GM10248 (cell line): ENCODE measurements at regions of chr10 and their contacts with region 1.

Region 1: GRCh38 chr10:7687228-7687907 is 15.7 kb upstream of the ITIH2 start:
- DNase-seq: peak; percentile 78
- CTCF ChIP-seq: peak; percentile 87

Region 2: GRCh38 chr10:7671121-7671520 is 16.2 kb before region 1 on chr10:
- CTCF ChIA-PET with region 1: interaction called, 16 read pairs
- POLR2A ChIA-PET with region 1: no interaction called
- DNase-seq: no peak
- CTCF ChIP-seq: no peak

Region 3: DNA sequence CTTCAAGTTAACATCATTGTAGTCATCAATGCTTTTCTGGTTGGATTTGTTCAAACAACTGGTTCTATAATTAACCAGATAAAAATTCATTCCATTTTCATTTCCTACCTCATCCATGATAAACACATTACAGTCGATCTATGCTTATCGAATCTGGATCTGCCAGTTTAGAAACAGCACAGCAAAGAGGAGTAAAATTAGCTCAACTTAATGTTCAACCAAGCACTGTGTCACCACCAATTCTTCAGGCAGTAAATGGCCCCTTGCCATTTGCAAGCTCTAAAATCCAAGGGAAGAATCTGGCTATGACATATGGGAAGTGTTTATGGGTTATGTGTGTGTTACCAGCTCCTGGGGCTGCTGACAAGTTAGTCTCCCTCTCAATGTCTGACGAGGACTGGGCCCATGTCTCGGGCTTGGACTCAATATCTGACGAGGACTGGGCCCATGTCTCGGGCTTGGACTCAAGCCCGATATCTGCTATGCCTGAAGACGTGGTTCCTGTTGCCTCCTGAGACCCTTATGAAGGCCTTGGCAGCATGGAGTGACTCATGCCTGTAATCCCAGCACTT is 10.0 kb after region 1 on chr10:
- CTCF ChIA-PET with region 1: interaction called, 18 read pairs
- POLR2A ChIA-PET with region 1: no interaction called
- DNase-seq: no peak
- CTCF ChIP-seq: no peak